Activated T-helper 1 cell treated with anti-CD3 and anti-CD28 coated beads, Interleukin-12 subunit alpha, Interleukin-12 subunit beta, Interleukin-2, Interleukin-4 antibody, amounts not matched to agents 30 ng/mL and 10 ng/mL and 1 ng/mL, durations not matched to agents 14 hours and 24 hours and 36 hours (primary cell): ENCODE measurements at regions of chr20 and their contacts with region 1.

Region 1: DNA sequence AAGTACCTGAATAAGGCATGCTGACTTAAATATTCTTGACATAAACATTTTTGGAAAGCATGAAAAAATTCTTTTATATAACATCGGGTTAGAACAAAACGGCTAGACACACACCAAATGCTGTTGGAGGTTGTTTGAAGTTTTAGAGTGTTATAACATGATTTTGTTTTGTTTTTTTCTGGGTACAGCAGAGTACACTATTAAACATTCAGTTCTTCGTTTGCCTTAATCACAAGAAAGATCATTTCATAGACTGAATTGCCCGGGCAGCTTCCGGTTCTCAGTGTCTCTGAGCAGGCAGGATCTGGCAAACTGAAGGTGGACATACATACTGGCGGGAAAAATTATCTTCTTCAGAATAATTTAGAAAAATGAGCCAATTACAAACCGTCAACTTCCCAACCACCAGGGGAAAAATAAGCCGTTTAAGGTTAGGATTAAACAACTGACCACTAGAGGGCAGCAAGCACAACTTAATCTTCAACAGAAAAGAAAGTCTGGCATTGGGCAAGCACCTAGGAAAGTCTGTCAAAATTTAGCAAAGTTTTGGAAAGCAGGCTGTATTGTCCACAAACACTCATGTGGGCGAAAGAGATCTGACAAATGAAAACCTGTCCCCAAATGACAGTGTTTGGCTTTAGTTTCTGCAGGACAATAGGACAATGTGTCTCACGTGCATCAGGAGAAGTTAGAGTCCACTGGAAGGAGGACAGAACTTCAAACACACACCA is 15.0 kb downstream of the ZNF217 start:
- DNase-seq: peak; percentile 62
- H3K4me3 Mint-ChIP-seq: peak overlapping the region; percentile 83
- H3K27ac Mint-ChIP-seq: peak overlapping the region; percentile 88
- H3K4me1 Mint-ChIP-seq: peaks cover 85% of the 10 kb centered on the region
- H3K27me3 Mint-ChIP-seq: no peaks in the 10 kb centered on the region

Region 2: DNA sequence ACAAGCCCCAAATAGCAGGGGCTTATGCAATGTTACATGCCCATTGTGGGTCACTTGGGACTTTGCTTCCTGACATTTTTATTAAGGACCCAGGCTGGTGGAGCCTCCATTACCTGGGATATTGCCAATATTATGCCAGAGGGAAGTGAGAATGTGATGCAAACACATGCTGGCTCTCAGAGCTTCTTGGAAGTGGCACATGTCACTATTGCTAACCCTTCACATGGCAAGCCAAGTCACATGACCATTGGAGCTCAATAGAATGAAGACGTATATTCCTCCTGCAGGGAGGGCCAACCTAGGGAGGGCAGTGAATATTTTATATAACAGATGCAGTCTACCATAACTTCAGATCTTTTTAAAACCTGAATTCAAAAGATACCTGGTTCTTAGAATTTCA is 1246.4 kb before region 1 on chr20:
- intact Hi-C with region 1: no loop called
- DNase-seq: no peak
- H3K4me3 Mint-ChIP-seq: no peak overlapping the region
- H3K27ac Mint-ChIP-seq: no peak overlapping the region
- H3K4me1 Mint-ChIP-seq: no peaks in the 10 kb centered on the region
- H3K27me3 Mint-ChIP-seq: peaks cover 2% of the 10 kb centered on the region

Region 3: GRCh38 chr20:53559816-53560215 is 18.8 kb before region 1 on chr20:
- intact Hi-C with region 1: no loop called
- DNase-seq: no peak
- H3K4me3 Mint-ChIP-seq: no peak overlapping the region
- H3K27ac Mint-ChIP-seq: no peak overlapping the region
- H3K4me1 Mint-ChIP-seq: no peaks in the 10 kb centered on the region
- H3K27me3 Mint-ChIP-seq: no peaks in the 10 kb centered on the region

Region 4: DNA sequence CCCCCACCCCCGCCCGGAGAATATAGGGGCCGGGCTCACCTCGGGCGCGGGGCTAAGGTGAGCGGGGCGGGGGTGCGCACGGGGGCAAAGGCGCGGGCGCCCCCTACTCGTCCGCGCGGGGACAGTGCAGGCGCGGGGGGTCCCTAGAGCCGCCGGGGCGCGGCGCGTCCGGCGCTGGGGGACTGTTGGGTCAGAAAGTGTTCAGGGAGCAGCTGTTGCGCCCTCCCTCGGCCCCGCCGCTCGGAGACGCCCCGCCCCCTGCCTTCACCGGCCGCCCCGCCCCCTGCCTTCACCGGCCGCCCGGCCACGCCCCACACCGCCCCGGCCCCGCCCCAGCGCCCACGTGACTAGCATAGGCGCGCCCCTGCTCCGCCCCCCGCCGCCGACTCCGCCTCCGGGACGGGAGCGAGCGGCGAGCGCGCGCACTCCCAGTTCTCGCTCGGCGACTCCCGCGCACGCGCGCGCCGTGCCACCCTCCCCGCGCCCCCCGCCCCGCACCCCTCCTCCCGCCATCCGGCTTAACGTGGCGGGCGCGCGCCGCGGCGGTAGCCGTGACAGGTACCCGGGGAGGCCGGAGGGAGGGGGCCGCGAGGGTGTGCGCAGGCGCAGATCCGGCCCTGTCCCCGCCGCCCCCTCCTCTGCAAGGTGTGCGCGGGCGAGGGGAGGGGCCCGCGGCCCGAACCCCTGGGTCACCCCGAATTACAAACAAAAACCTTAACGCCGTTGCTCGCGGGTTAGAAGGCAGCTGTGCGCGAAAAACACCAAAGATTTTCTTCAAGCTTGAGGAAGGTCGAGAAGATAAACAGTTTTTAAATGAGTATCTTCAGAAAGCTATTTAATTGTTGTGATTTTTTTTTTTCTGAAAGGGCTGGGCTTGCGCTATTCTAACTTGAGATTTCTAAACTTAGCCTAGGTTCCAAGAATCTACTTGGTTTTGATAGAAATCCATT is 15.7 kb after region 1 on chr20:
- intact Hi-C with region 1: loop called (anchors 1 kb)
- DNase-seq: peak; percentile 94
- H3K4me3 Mint-ChIP-seq: peak overlapping the region; percentile 90
- H3K27ac Mint-ChIP-seq: peak overlapping the region; percentile 86
- H3K4me1 Mint-ChIP-seq: peaks cover 70% of the 10 kb centered on the region
- H3K27me3 Mint-ChIP-seq: no peaks in the 10 kb centered on the region

Region 5: GRCh38 chr20:53652090-53652858 is 73.6 kb after region 1 on chr20:
- intact Hi-C with region 1: loop called (anchors 1 kb)
- DNase-seq: no peak
- H3K4me3 Mint-ChIP-seq: peak overlapping the region; percentile 70
- H3K27ac Mint-ChIP-seq: peak overlapping the region; percentile 97
- H3K4me1 Mint-ChIP-seq: peaks cover 41% of the 10 kb centered on the region
- H3K27me3 Mint-ChIP-seq: no peaks in the 10 kb centered on the region

Region 6: DNA sequence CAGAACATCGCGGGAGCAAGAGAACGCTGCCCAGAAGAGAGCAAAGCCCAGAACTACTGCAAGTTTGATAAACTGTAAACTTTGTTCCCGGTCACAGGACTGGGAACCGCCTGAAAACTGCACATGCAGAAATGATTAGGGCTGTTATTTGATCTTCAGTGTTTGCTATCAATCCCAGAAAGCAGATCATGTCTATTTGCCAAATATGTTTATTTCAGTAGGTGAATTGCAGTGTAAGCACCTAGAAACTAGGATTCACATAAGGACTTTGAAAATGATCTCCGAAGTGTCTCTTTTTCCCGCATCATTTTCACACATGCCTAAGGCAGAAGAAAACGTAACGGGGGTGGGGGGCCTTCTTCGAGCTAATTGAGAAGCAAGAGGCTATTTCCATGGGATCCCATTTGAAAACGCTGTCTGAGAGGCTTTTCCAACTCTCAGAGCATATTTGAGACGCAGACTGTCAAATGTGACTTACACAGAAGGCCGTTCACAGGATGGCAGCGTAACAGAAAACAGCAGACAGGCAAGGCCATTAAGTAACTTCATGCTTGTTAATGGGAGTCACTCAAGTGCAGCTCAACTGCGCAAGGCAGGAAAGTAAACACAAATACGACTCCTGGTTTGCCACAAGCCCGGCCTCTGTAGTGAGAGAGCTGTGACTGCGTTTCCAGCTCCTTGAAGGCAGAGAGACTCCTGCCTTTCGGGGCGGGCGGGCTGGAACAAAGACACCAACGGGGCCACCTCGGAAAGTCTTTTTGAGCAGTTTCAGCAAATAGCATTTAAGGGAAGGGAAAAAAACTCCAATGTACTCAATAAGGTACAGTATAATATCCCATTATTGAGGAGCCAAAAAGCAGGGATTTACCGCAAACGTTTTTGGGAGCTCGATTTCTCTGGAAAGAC is 159.6 kb after region 1 on chr20:
- intact Hi-C with region 1: no loop called
- DNase-seq: no peak
- H3K4me3 Mint-ChIP-seq: no peak overlapping the region
- H3K27ac Mint-ChIP-seq: no peak overlapping the region
- H3K4me1 Mint-ChIP-seq: peaks cover 78% of the 10 kb centered on the region
- H3K27me3 Mint-ChIP-seq: no peaks in the 10 kb centered on the region

Region 7: DNA sequence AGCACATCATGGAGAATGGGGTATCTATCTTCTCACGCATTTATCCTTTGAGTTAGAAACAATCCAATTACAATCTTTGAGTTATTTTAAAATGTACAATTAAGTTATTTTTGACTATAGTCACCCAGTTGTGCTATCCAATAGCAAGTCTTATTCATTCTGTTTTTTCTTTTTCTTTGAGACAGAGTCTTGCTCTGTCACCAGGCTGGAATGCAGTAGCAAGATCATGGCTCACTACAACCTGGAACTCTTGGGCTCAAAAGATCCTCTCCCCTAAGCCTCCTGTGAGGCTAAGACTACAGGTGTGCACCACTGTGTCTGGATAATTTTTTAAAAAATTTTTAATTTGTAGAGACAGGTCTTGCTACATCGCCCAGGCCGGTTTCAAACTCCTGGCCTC is 216.5 kb after region 1 on chr20:
- intact Hi-C with region 1: no loop called
- DNase-seq: no peak
- H3K4me3 Mint-ChIP-seq: no peak overlapping the region
- H3K27ac Mint-ChIP-seq: no peak overlapping the region
- H3K4me1 Mint-ChIP-seq: peaks cover under 1% of the 10 kb centered on the region
- H3K27me3 Mint-ChIP-seq: no peaks in the 10 kb centered on the region

Region 8: GRCh38 chr20:53915446-53916172 is 337.0 kb after region 1 on chr20:
- intact Hi-C with region 1: loop called (anchors 1 kb)
- DNase-seq: peak; percentile 84
- H3K4me3 Mint-ChIP-seq: peak overlapping the region; percentile 89
- H3K27ac Mint-ChIP-seq: peak overlapping the region; percentile 93
- H3K4me1 Mint-ChIP-seq: peaks cover 42% of the 10 kb centered on the region
- H3K27me3 Mint-ChIP-seq: no peaks in the 10 kb centered on the region

Region 9: DNA sequence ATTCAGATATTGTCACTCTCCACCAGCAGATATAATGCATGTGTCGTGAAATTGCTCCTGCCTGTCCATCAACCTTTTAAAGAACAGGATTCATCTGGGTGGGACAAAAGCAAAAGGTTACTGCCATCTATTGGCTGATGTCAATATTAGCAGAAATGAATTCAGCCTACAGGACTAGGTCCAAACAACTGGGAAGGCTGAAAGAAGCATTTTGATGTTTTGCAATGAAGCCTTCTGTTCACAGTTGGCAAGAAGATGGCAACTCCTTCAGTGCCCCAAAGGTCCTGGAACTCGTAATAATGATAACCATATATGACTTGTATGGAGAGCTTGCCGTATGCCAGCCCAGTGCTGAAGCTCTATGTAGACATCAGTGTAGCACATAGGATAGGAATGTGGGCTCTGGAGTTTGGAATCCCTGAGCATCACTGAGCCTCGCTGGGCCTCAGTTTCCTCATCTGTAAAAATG is 484.2 kb after region 1 on chr20:
- intact Hi-C with region 1: loop called (anchors 2 kb)
- DNase-seq: no peak
- H3K4me3 Mint-ChIP-seq: no peak overlapping the region
- H3K27ac Mint-ChIP-seq: no peak overlapping the region
- H3K4me1 Mint-ChIP-seq: peaks cover 9% of the 10 kb centered on the region
- H3K27me3 Mint-ChIP-seq: peaks cover 2% of the 10 kb centered on the region